Activated CD8-positive, alpha-beta T cell treated with anti-CD3 and anti-CD28 coated beads, Interleukin-2, amount 10 ng/mL, durations not matched to agents 7 days and 5 days (primary cell): ENCODE measurements at regions of chr7 and their contacts with region 1.

Region 1: GRCh38 chr7:33109005-33109757 is at the start of gene RP9:
- DNase-seq: peak; percentile 78
- ATAC-seq: peak; percentile 94
- H3K4me3 Mint-ChIP-seq: peak within 1 kb of the TSS; percentile 87
- H3K27ac Mint-ChIP-seq: peak within 1 kb of the TSS; percentile 66
- H3K4me1 Mint-ChIP-seq: peaks cover 29% of the 10 kb centered on the region
- H3K27me3 Mint-ChIP-seq: peaks cover 19% of the 10 kb centered on the region
- total RNA-seq, gene RP9: 9.6 to 11.8 TPM

Region 2: GRCh38 chr7:32490127-32490822 is 618.9 kb before region 1 on chr7 and contains the start of gene LSM5:
- CTCF ChIA-PET with region 1: interaction called, 10 read pairs
- POLR2A ChIA-PET with region 1: no interaction called
- DNase-seq: peak; percentile 94
- ATAC-seq: peak; percentile 81
- H3K4me3 Mint-ChIP-seq: peak within 1 kb of the TSS; percentile 77
- H3K27ac Mint-ChIP-seq: peak within 1 kb of the TSS; percentile 90
- H3K4me1 Mint-ChIP-seq: peaks cover 36% of the 10 kb centered on the region
- H3K27me3 Mint-ChIP-seq: no peaks in the 10 kb centered on the region
- total RNA-seq, gene LSM5: 94.4 to 97.1 TPM

Region 3: GRCh38 chr7:32803406-32804141 is 305.6 kb before region 1 on chr7:
- CTCF ChIA-PET with region 1: interaction called, 25 read pairs
- POLR2A ChIA-PET with region 1: no interaction called
- DNase-seq: no peak
- ATAC-seq: no peak
- H3K4me3 Mint-ChIP-seq: no peak overlapping the region
- H3K27ac Mint-ChIP-seq: no peak overlapping the region
- H3K4me1 Mint-ChIP-seq: no peaks in the 10 kb centered on the region
- H3K27me3 Mint-ChIP-seq: no peaks in the 10 kb centered on the region

Region 4: GRCh38 chr7:32891800-32892520 is 217.2 kb before region 1 on chr7:
- CTCF ChIA-PET with region 1: interaction called, 21 read pairs
- POLR2A ChIA-PET with region 1: interaction called, 7 read pairs
- DNase-seq: peak; percentile 98
- ATAC-seq: peak; percentile 62
- H3K4me3 Mint-ChIP-seq: peak overlapping the region; percentile 80
- H3K27ac Mint-ChIP-seq: peak overlapping the region; percentile 94
- H3K4me1 Mint-ChIP-seq: peaks cover 40% of the 10 kb centered on the region
- H3K27me3 Mint-ChIP-seq: peaks cover 4% of the 10 kb centered on the region

Region 5: DNA sequence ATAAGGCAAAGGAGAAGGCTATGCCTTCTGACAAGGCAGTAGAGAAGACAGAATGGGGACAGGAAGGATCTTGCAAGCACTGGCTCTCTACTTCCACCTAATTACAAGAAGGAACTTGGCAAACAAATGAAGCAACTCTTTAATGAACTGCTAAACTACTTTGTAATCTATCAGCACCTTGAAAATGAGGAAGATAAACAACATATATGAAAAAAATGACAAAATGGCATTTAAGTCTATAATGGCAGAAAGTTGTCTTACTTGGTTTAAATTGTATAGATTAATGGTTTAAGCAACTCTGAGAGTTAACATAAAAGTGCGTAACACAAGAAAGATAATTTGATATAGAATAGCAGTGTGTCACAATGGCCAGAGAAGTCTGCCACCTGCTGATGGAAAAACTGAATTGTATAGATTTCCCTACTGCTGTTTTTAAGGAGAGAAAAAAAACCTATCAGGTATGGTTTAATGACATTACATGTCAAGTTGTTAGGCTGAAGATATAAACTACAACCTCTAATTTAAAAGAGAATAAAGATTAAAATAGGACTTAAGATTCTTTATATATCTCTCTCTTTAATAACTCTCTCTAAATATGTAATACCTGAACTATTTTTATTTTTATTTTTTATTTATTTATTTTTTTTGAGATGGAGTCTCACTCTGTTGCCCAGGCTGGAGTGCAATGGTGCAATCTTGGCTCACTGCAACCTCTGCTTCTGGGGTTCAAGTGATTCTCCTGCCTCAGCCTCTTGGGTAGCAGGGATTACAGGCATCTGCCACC is 58.5 kb before region 1 on chr7:
- CTCF ChIA-PET with region 1: interaction called, 23 read pairs
- POLR2A ChIA-PET with region 1: no interaction called
- DNase-seq: peak; percentile 54
- ATAC-seq: peak; percentile 51
- H3K4me3 Mint-ChIP-seq: no peak overlapping the region
- H3K27ac Mint-ChIP-seq: no peak overlapping the region
- H3K4me1 Mint-ChIP-seq: peaks cover 49% of the 10 kb centered on the region
- H3K27me3 Mint-ChIP-seq: no peaks in the 10 kb centered on the region

Region 6: GRCh38 chr7:33072471-33072870 is 36.7 kb before region 1 on chr7:
- CTCF ChIA-PET with region 1: interaction called, 15 read pairs
- POLR2A ChIA-PET with region 1: no interaction called
- DNase-seq: no peak
- ATAC-seq: no peak
- H3K4me3 Mint-ChIP-seq: no peak overlapping the region
- H3K27ac Mint-ChIP-seq: no peak overlapping the region
- H3K4me1 Mint-ChIP-seq: peaks cover 11% of the 10 kb centered on the region
- H3K27me3 Mint-ChIP-seq: peaks cover 20% of the 10 kb centered on the region